PC-9 (cell line): ENCODE measurements at regions of chr9 and their contacts with region 1.

Region 1: GRCh38 chr9:34291023-34291422 is 38.0 kb downstream of the KIF24 start:
- DNase-seq: no peak
- H3K4me3 ChIP-seq: no peak overlapping the region
- H3K27ac ChIP-seq: no peak overlapping the region
- H3K4me1 ChIP-seq: no peaks in the 10 kb centered on the region
- H3K27me3 ChIP-seq: no peaks in the 10 kb centered on the region
- CTCF ChIP-seq: no peak

Region 2: DNA sequence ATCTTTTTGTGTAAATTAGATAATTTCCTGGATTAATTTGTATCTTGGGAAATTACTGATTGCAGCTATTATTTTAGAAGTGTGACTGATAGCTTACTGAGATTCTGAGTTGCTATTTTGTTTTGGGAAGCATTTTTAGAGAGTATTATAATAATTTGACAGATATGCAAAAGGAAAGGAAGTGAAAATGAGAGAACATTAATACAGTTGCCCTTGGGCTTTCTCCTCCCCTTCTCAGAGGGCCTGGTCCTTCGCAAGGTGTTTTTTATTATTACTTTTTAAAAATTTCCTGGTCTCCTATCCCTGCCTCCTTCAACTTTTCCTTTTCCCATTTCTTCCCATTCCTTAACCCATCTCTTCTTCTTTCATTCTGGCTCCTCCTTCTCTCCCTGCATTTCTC is 79.6 kb before region 1 on chr9:
- CTCF ChIA-PET with region 1: no interaction called
- POLR2A ChIA-PET with region 1: interaction called, 12 read pairs
- intact Hi-C with region 1: no loop called
- DNase-seq: no peak
- H3K4me3 ChIP-seq: no peak overlapping the region
- H3K27ac ChIP-seq: no peak overlapping the region
- H3K4me1 ChIP-seq: no peaks in the 10 kb centered on the region
- H3K27me3 ChIP-seq: no peaks in the 10 kb centered on the region
- CTCF ChIP-seq: no peak

Region 3: GRCh38 chr9:34328987-34329832 is 38.2 kb after region 1 on chr9 and contains the starts of genes KIF24 and NUDT2:
- CTCF ChIA-PET with region 1: no interaction called
- POLR2A ChIA-PET with region 1: no interaction called
- intact Hi-C with region 1: no loop called
- DNase-seq: peak; percentile 92 to 98
- H3K4me3 ChIP-seq: peak within 1 kb of the TSS; percentile 88
- H3K27ac ChIP-seq: peak within 1 kb of the TSS; percentile 76
- H3K4me1 ChIP-seq: peaks cover 17% of the 10 kb centered on the region
- H3K27me3 ChIP-seq: no peaks in the 10 kb centered on the region
- CTCF ChIP-seq: no peak
- total RNA-seq, gene KIF24: 4.5 and 6.9 TPM in 2 replicates
- total RNA-seq, gene NUDT2: 31.3 and 33.8 TPM in 2 replicates